Tibial artery (tissue), 4 donors: ENCODE measurements at regions of chr6 and their contacts with region 1.

Region 1: GRCh38 chr6:143575440-143575839 is 63.9 kb upstream of the FUCA2 start:
- DNase-seq: peak; percentile 39 to 76
- H3K4me3 ChIP-seq: no peak overlapping the region
- H3K27ac ChIP-seq: no peak overlapping the region
- H3K4me1 ChIP-seq: no peaks in the 10 kb centered on the region
- H3K27me3 ChIP-seq: no peaks in the 10 kb centered on the region
- CTCF ChIP-seq: peak; percentile 89 to 95

Region 2: DNA sequence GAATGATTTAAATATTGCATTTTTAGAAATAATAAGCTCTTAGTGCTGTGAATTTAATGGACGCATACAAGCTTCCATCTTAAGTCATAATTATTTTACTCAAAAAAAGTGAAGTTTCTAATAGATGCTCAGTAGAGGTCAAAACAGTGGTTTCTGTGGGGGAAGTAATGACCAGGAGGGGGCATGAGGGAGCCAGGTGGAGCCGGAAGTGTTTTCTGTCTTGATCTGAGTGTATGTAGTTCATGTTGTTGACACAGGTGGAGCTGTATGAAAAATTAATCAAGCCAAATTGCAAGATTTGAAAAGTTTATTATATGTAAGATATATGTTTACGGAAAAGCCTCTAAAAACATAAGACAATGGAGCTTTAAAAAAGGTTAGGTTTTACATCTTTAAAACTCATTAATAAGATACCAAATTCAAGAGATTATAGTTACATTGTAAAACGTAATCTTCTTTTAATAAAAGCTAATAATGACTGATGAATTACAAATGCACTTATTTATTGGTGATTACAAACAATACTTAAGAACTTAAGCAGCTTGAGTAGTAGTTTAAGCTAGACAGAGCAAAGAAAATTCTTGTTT is 364.7 kb after region 1 on chr6:
- intact Hi-C with region 1: loop called (anchors 10 kb)
- DNase-seq: no peak
- H3K4me3 ChIP-seq: no peak overlapping the region
- H3K27ac ChIP-seq: no peak overlapping the region
- H3K4me1 ChIP-seq: no peaks in the 10 kb centered on the region
- H3K27me3 ChIP-seq: no peaks in the 10 kb centered on the region
- CTCF ChIP-seq: peak; percentile 44 to 56

Region 3: DNA sequence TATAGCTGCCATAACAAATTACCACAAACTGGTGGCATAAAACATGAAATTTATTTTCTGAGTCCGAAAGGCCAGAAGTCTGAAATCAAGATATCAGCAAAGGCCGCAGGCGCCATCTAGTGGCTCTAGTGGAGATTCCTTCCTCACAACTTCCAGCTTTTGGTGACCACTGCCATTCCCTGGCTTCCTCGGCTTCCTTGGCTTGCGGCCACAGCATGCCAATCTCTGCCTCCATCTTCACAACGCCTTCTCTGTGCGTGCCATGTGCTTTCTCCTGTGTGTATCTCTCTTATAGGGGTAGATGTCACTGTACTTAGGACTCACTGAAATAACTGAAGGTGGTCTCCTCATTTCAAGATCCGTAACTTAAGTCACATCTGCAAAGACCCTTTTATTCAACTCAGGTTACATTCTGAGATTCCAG is 438.1 kb after region 1 on chr6:
- intact Hi-C with region 1: loop called (anchors 2 kb)
- DNase-seq: peak; percentile 57 to 81
- H3K4me3 ChIP-seq: no peak overlapping the region
- H3K27ac ChIP-seq: no peak overlapping the region
- H3K4me1 ChIP-seq: no peaks in the 10 kb centered on the region
- H3K27me3 ChIP-seq: no peaks in the 10 kb centered on the region
- CTCF ChIP-seq: peak; percentile 90 to 95